Activated CD4-positive, alpha-beta T cell treated with anti-CD3 and anti-CD28 coated beads, Interleukin-2, amount 10 ng/mL, durations not matched to agents 7 days and 5 days (primary cell): ENCODE measurements at regions of chr20 and their contacts with region 1.

Region 1: GRCh38 chr20:50478162-50479036 is 31.8 kb upstream of the PTPN1 start:
- DNase-seq: peak; percentile 83
- H3K4me3 Mint-ChIP-seq: no peak overlapping the region
- H3K27ac Mint-ChIP-seq: peak overlapping the region; percentile 41
- H3K4me1 Mint-ChIP-seq: peaks cover 43% of the 10 kb centered on the region
- H3K27me3 Mint-ChIP-seq: no peaks in the 10 kb centered on the region

Region 2: DNA sequence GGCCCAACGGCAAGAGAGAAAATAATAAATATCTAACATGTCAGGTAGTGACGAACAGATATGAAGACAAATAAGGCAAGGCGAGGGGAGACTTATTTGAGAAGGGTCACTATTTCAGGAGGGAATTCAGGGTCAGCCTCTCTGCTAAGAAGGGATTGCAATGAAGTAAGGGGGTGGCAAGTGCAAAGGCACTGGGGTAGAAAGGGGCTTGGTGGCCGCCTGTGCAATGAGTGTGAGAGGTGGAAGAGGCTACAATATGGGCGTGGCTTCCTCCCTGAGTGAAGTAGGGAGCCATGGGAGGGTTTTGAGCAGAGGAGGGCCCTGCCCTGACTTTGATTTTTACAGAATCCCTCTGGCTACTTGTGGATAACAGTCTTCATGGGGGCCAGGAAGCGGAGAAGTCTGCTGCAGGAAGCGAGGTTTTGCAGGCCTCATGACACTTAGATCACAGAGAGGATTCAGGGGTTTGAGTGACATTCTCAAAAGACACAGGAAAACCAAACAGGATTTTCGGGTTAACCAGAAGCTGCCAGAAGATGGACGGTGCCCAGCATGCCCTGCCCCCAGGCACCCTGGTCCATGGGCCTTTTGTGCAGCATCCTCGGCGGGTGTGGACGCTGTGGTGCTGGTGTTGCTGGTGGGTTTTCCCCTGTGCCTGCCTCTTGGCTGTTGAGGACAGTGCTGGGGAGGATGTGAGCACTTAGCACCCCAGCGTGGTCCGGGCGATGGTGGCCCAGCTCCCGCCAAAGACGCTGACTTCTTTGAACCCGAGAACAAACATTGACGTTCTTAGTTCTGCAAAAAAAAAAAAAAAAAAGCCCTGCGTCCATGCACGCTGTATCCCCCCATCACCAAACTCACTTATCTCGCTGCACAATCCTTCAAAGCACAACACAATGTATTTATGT is 92.4 kb before region 1 on chr20:
- CTCF ChIA-PET with region 1: no interaction called
- POLR2A ChIA-PET with region 1: no interaction called
- DNase-seq: peak; percentile 77
- H3K4me3 Mint-ChIP-seq: peak overlapping the region; percentile 20
- H3K27ac Mint-ChIP-seq: peak overlapping the region; percentile 80
- H3K4me1 Mint-ChIP-seq: peaks cover 79% of the 10 kb centered on the region
- H3K27me3 Mint-ChIP-seq: no peaks in the 10 kb centered on the region

Region 3: DNA sequence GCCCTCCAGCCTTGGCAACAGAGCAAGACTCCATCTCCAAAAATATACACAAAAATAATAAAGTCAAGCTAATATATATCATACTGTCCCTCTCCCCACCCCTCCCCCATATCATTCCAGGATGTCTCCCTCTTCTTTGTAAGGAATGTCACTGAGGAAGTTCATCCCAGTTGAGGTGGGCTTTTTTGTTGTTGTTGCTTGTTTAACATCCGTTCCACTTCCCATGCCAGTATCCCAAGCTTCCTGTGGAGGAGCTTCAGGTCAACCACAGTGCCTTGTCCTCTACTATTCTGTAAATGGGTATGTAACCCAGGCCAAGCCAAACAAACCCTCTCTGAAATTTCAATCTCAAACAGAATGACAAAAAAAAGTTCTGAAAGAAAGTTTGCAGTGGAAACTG is 12.8 kb after region 1 on chr20:
- CTCF ChIA-PET with region 1: interaction called, 10 read pairs
- POLR2A ChIA-PET with region 1: interaction called, 6 read pairs
- DNase-seq: no peak
- H3K4me3 Mint-ChIP-seq: no peak overlapping the region
- H3K27ac Mint-ChIP-seq: no peak overlapping the region
- H3K4me1 Mint-ChIP-seq: peaks cover 14% of the 10 kb centered on the region
- H3K27me3 Mint-ChIP-seq: no peaks in the 10 kb centered on the region

Region 4: DNA sequence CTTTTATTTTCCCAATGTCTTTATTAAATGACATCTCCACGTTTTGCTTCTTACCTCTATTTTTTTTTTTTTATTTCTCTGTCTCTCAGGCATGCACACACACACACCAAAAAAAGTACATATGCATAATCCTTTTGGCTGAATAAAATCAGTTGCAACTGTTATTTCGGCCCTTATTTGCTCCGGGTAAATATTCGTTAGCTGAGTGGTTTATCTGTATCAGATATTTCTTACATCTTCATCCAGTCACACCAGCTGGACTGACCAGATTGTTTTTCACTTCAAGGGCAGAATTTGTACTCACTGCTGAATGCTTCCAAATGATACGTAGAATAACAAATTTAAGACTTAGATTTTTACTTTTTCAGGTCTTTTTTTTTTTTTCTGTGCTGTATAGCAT is 77.3 kb after region 1 on chr20:
- CTCF ChIA-PET with region 1: no interaction called
- POLR2A ChIA-PET with region 1: no interaction called
- DNase-seq: no peak
- H3K4me3 Mint-ChIP-seq: no peak overlapping the region
- H3K27ac Mint-ChIP-seq: no peak overlapping the region
- H3K4me1 Mint-ChIP-seq: peaks cover 23% of the 10 kb centered on the region
- H3K27me3 Mint-ChIP-seq: no peaks in the 10 kb centered on the region

Region 5: GRCh38 chr20:50575847-50576720 is 97.7 kb after region 1 on chr20:
- CTCF ChIA-PET with region 1: interaction called, 11 read pairs
- POLR2A ChIA-PET with region 1: no interaction called
- DNase-seq: peak; percentile 73
- H3K4me3 Mint-ChIP-seq: no peak overlapping the region
- H3K27ac Mint-ChIP-seq: peak overlapping the region; percentile 31
- H3K4me1 Mint-ChIP-seq: peaks cover 39% of the 10 kb centered on the region
- H3K27me3 Mint-ChIP-seq: no peaks in the 10 kb centered on the region